ENCODE measurements at regions of chr19 and their contacts with region 1.

Region 1: DNA sequence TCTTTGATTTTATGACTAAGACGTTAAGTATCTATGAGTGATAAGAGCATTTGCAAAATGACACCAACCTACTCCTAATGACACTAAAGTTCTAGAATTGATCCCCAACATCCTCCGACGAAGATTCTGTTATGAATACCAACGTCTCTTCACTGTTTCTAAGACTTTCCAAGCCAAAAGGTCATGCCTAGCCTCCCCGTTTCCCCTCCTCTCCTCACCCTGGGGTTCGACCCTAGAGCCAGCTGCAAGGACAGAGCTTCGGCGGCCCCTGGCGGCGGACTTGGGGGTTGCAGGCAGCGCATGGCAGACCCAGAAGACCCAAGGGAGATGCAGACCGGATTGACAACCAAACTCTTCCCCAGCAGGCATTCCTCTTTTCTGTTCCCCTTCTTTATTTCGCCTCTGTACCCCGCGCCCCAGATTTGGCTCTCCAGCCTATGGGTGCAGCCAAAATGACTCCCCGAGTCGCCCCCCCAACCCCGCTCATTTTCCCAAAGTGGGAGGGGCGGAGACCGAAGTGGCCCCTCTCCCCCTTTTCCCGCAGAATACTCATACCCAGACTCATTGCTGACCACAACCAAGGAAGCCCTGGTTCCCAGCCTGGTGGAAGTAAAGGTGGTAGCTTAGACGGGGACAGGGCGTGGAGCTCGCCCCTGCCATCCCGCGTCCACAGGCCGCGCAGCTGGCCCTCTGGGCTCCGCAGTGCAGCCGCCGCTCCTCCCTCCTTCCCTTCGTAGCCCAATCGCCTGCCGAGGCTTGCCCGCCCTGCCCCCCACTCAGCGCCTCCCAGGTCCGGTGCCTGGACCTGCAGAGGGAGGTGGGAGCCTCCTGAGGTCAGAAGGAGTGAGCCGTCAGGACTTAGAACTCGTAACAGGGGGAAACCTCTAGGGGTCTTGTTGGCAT is 4.1 kb upstream of the EML2 start:
- DNase-seq: no peak
- H3K4me3 ChIP-seq: peak overlapping the region in 1 of 2 donors; percentile 34
- H3K27ac ChIP-seq: no peak overlapping the region
- H3K4me1 ChIP-seq: peaks cover 59% of the 10 kb centered on the region
- H3K27me3 ChIP-seq: no peaks in the 10 kb centered on the region
- CTCF ChIP-seq: peak; percentile 93 to 98 (median 96)
- POLR2A ChIP-seq: no peak

Region 2: GRCh38 chr19:45523642-45524256 is 119.5 kb before region 1 on chr19:
- intact Hi-C with region 1: loop called (anchors 1 kb)
- DNase-seq: no peak
- H3K4me3 ChIP-seq: no peak overlapping the region
- H3K27ac ChIP-seq: no peak overlapping the region
- H3K4me1 ChIP-seq: peaks cover 18% of the 10 kb centered on the region
- H3K27me3 ChIP-seq: no peaks in the 10 kb centered on the region
- CTCF ChIP-seq: peak; percentile 87 to 98 (median 88)
- POLR2A ChIP-seq: no peak

Region 3: GRCh38 chr19:45607071-45608029 is 35.9 kb before region 1 on chr19:
- intact Hi-C with region 1: loop called (anchors 5 kb)
- DNase-seq: no peak
- H3K4me3 ChIP-seq: peak overlapping the region in 1 of 2 donors; percentile 41
- H3K27ac ChIP-seq: peak overlapping the region; percentile 24
- H3K4me1 ChIP-seq: peaks cover 11% of the 10 kb centered on the region
- H3K27me3 ChIP-seq: peaks cover 1% of the 10 kb centered on the region
- CTCF ChIP-seq: peak; percentile 55 to 75 (median 74)
- POLR2A ChIP-seq: no peak

Region 4: DNA sequence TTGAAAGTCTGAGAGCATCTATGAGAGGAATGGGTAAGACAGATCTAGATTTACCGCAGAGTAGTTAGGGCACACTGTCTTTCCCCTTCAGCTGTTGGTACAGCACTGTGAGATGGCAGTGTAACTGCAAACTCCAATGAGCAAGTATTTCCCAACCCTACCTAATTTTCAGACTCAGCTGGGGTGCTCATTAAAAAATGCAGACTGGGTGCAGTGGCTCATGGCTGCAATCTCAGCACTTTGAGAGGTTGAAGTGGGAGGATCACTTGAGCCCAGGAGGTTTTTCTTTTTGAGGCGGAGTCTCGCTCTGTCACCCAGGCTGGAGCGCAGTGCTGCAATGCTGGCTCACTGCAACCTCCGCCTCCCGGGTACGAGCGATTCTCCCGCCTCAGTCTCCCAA is 61.8 kb after region 1 on chr19:
- intact Hi-C with region 1: no loop called
- DNase-seq: no peak
- H3K4me3 ChIP-seq: no peak overlapping the region
- H3K27ac ChIP-seq: no peak overlapping the region
- H3K4me1 ChIP-seq: no peaks in the 10 kb centered on the region
- H3K27me3 ChIP-seq: no peaks in the 10 kb centered on the region
- CTCF ChIP-seq: no peak
- POLR2A ChIP-seq: no peak

Measured in vagina (tissue), 2 donors.